Mammary epithelial cell (primary cell): ENCODE measurements at regions of chr2 and their contacts with region 1.

Region 1: DNA sequence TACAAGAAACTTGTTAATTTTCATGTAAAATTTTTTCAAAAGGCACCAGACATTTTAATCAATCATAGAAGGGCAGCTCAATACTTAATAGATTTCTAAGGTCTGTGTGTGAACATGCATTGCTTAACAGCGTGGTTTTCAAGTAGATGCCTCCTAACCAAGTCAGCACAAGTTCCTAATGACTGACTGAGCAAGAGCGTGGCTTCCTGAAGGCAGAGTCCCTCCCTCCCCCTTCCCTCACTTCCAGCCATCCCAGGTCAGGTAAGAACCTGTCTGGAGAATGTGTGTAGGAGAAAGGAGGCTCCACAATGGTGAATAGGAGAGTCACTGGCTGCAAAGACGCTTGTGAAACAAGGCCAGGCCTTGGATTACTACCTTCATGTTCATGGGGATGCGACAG is 33.5 kb upstream of the DAPL1 start:
- DNase-seq: peak; percentile 99
- H3K4me3 ChIP-seq: peak overlapping the region in 2 of 3 experiments; percentile 0 to 13
- H3K27ac ChIP-seq: peak overlapping the region; percentile 82
- H3K4me1 ChIP-seq: peaks cover 21% of the 10 kb centered on the region
- H3K27me3 ChIP-seq: no peaks in the 10 kb centered on the region
- CTCF ChIP-seq: no peak

Region 2: DNA sequence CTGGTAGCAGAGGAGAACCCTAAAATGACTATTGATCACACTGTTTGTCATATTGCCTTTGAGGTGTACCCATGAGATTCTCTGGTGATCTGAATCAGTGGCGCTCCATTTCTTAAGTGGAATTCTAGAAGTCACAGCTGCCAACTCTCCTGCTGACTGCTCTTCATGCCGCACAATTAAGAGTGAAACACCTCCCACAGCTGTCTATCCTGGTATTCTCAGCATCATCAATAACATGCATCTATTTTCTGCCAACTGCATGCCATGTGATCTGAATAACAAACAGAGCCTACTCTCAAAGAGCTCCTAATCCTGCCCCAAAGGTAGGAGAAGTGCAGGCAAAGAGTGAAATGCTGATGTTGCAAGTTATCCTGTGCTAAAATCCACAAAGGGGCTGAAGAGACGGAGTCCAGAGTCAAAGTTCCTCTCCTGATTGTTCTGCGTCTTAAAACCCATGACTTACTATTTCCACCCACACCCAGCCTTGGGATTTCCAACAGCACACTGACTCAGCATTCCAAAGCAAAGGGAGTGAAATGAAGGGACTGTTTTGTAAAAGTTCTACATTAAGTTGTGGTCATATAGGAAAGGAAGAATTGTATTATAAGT is 19.8 kb after region 1 on chr2:
- CTCF ChIA-PET with region 1: no interaction called
- dilution Hi-C with region 1: no loop called
- in situ Hi-C with region 1: no loop called
- intact Hi-C with region 1: loop called (anchors 2 kb)
- DNase-seq: peak; percentile 91
- H3K4me3 ChIP-seq: no peak overlapping the region
- H3K27ac ChIP-seq: peak overlapping the region; percentile 55
- H3K4me1 ChIP-seq: peaks cover 19% of the 10 kb centered on the region
- H3K27me3 ChIP-seq: no peaks in the 10 kb centered on the region
- CTCF ChIP-seq: no peak

Region 3: GRCh38 chr2:158841850-158842249 is 80.2 kb after region 1 on chr2:
- CTCF ChIA-PET with region 1: no interaction called
- dilution Hi-C with region 1: no loop called
- in situ Hi-C with region 1: no loop called
- intact Hi-C with region 1: no loop called
- DNase-seq: no peak
- H3K4me3 ChIP-seq: no peak overlapping the region
- H3K27ac ChIP-seq: no peak overlapping the region
- H3K4me1 ChIP-seq: no peaks in the 10 kb centered on the region
- H3K27me3 ChIP-seq: peaks cover 6% of the 10 kb centered on the region
- CTCF ChIP-seq: no peak